Endothelial cell of umbilical vein (primary cell): ENCODE measurements at regions of chr7 and their contacts with region 1.

Region 1: GRCh38 chr7:106461993-106462859 is 177.4 kb upstream of the NAMPT start:
- DNase-seq: peak; percentile 83
- H3K4me3 ChIP-seq: no peak overlapping the region
- H3K27ac ChIP-seq: peak overlapping the region; percentile 32
- H3K4me1 ChIP-seq: peaks cover 22% of the 10 kb centered on the region
- H3K27me3 ChIP-seq: no peaks in the 10 kb centered on the region
- CTCF ChIP-seq: peak; percentile 25 to 37
- POLR2A ChIP-seq: no peak

Region 2: DNA sequence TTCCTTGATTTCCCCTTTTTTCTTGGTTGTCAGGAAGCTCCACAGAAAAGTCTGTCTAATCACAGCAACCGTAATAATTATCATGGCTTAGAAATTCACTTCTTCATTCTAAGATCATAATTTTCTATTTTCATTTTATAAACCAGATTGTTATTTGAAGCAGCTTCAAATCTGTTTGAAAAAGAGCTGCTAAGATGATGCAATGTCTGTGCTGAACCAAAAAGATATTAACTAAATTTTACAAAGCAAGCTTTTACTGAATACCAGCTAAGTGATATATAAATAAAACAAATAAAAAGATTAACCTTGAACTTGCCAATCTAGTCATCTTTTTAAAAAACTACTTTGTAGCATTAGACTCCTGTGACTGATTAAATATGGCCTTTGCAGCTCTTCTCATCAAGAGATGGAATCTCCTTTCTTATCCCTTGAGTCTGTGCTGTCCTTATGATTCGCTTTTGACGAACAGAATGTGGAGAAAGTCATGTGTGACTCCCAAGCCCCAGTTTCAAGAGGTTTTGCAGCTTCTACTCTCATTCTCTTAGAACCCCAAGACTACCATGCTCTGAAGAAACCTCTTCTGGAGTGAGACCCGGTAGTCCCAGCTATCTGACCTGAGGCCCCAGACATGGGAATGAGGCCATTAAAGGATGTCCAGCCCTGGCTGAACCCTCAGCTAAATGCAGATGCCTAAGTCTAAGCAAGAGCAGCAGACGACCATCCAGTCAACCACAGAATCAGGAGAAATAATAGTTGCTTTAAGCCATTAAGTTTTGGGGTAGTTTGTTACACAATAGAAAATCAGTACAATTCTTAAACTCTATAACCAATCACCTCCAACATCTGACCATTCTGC is 191.9 kb before region 1 on chr7:
- CTCF ChIA-PET with region 1: interaction called, 19 read pairs
- POLR2A ChIA-PET with region 1: no interaction called
- dilution Hi-C with region 1: no loop called
- intact Hi-C with region 1: no loop called
- DNase-seq: no peak
- H3K4me3 ChIP-seq: no peak overlapping the region
- H3K27ac ChIP-seq: no peak overlapping the region
- H3K4me1 ChIP-seq: no peaks in the 10 kb centered on the region
- H3K27me3 ChIP-seq: no peaks in the 10 kb centered on the region
- CTCF ChIP-seq: no peak
- POLR2A ChIP-seq: no peak

Region 3: DNA sequence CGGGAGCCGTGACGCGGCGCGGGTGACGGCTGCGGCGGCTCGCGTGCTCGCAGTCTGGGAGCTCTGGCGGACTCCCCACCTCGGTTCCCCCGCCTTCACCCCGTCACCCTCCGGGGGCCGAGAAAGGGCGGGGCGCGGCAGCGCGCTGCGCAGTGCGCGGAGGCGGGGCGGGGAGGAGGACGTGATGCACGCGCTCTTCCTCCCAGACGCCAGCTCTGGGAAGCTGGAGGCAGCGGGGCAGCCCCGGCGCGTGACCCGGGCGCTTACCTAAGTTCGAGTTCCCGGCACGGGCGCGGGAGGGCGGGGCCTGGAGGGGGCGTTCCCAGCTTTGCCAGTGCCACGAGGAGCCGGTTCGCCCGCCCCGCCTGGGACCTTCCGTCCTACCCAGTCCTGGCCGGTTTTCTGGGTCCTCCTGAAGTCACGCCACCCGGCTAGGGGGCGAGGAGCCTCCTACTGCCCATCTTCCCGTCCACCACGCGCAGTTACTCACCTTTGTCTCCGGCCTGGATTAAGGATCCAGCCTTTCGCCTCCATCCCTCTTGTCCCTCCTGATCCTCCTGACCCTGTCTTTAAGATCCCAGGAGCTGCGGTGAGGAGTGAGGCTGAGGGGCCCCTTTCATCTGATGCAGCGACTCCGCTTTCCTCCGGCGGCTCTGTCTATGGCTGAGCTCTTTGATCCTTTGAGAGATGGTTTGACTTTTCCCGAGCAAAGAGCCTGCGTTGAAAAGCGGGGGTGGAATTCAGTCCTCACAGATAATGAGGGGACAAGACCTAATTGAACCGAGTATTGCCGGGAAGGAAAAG is 177.0 kb before region 1 on chr7:
- CTCF ChIA-PET with region 1: interaction called, 49 read pairs
- POLR2A ChIA-PET with region 1: interaction called, 11 read pairs
- dilution Hi-C with region 1: no loop called
- intact Hi-C with region 1: loop called (anchors 1 kb)
- DNase-seq: peak; percentile 99
- H3K4me3 ChIP-seq: peak overlapping the region; percentile 56 to 80 (median 72)
- H3K27ac ChIP-seq: peak overlapping the region; percentile 80
- H3K4me1 ChIP-seq: peaks cover 27% of the 10 kb centered on the region
- H3K27me3 ChIP-seq: no peaks in the 10 kb centered on the region
- CTCF ChIP-seq: no peak
- POLR2A ChIP-seq: peak; percentile 93

Region 4: GRCh38 chr7:106384371-106384770 is 77.9 kb before region 1 on chr7:
- CTCF ChIA-PET with region 1: interaction called, 14 read pairs
- POLR2A ChIA-PET with region 1: no interaction called
- dilution Hi-C with region 1: no loop called
- intact Hi-C with region 1: no loop called
- DNase-seq: no peak
- H3K4me3 ChIP-seq: no peak overlapping the region
- H3K27ac ChIP-seq: no peak overlapping the region
- H3K4me1 ChIP-seq: no peaks in the 10 kb centered on the region
- H3K27me3 ChIP-seq: peaks cover 7 to 8% of the 10 kb centered on the region in 2 experiments
- CTCF ChIP-seq: no peak
- POLR2A ChIP-seq: no peak

Region 5: DNA sequence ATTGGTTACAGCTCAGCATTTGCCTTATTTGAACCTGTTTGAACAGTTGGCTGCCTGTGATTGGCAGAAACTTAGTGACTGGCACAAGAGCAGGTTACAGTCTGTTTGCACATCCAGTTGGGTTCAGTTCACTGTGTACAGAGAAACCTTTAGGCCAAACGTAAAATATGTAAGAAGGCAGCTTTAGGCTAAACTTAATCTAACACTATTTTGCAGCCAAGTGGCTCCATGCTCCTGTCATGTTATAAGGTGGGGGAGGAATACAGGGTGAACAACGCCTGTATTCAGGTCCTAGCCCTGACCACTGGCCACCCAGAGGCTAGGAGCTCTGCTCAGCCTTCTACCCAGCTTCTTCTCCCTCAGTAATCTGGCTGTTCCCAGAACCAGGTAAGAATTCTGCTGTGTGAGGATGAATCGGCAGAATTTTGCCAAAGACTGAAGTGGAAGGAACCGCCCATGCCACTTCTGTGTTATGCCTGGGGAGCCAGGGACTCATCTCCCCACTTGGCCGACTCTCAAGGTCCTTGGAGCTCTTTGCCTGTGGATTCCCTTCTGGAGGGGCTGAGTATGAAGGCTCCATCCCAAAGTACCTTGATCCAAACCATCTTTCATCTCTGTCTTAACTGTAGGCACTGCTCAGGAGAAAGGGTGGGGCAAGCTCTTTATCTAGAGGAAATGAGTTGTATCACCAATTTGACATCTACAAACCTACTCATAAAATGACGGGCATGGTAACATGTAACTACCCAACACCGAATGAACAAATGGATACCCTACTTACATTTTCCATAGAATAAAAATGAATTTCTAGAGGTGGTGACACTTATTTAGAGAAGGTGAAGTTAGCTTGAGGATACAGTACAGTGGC is 13.0 kb before region 1 on chr7:
- CTCF ChIA-PET with region 1: interaction called, 11 read pairs
- POLR2A ChIA-PET with region 1: no interaction called
- dilution Hi-C with region 1: no loop called
- intact Hi-C with region 1: no loop called
- DNase-seq: no peak
- H3K4me3 ChIP-seq: no peak overlapping the region
- H3K27ac ChIP-seq: no peak overlapping the region
- H3K4me1 ChIP-seq: no peaks in the 10 kb centered on the region
- H3K27me3 ChIP-seq: no peaks in the 10 kb centered on the region
- CTCF ChIP-seq: no peak
- POLR2A ChIP-seq: no peak

Region 6: DNA sequence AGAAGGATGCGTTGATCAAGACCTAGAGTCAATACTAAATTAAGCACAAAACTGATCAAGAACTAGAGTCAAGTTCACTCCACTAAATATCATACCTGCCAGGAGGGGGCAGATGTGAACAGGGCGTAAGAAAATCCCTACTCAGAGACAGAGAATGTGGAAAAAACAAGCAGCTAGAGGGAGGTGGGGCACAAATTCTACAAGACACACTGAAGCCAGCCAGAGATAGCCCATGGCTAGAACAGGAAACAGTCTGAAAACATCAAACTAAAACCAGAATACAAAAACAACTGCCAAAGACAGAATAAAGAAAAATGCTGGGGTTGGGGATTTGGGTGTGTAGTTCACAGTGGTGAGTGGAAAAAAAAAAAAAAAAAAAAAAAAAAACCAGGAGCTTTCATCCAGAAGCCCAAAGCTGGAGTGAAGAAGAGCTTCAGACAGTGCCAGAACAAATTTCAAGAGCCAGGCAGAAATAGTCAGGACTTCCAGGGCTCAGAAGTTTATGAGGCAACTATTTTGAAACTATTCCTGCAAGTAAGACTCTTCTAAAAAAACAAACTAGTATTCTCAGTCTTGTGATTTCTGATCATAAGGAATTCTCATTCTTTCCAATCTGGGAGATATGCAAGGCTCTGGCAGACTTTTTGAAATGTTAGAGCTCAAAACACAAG is 80.5 kb after region 1 on chr7:
- CTCF ChIA-PET with region 1: interaction called, 26 read pairs
- POLR2A ChIA-PET with region 1: interaction called, 3 read pairs
- dilution Hi-C with region 1: no loop called
- intact Hi-C with region 1: loop called (anchors 1 kb)
- DNase-seq: peak; percentile 96
- H3K4me3 ChIP-seq: no peak overlapping the region
- H3K27ac ChIP-seq: peak overlapping the region; percentile 59
- H3K4me1 ChIP-seq: peaks cover 44% of the 10 kb centered on the region
- H3K27me3 ChIP-seq: no peaks in the 10 kb centered on the region
- CTCF ChIP-seq: peak; percentile 62 to 68
- POLR2A ChIP-seq: no peak

Region 7: DNA sequence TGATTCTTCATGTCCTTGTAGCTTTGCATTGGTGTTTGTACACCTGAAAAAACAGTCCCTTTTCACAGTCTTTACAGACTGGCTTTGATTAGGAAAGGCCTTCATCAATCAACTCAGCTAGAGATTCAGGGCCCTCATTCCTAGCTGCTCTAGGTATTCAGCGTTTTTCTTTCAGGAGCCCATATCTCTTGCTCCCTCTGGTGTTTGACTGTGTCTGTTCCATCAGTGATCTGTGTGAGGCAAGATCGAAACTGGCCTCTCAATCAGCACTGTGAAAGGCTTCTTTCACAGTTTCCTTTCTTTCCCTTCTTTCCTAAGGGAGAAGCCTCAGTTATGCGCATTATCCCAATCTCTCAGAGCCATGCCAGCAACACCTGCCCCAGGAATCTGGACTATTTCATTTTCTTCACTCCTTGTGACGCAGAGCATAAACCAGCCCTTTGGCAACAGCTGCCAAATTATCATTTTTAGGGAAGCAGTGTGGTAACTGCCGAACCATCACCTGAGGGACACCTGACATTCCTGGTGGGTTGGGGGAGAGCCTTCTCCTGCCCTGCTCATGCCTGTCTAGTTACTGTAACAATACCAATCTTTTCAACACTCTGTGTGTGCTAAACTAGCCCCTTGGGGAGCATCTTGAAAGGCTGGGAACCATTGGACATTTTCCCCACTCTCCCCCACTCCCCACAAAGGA is 274.4 kb after region 1 on chr7:
- CTCF ChIA-PET with region 1: interaction called, 9 read pairs
- POLR2A ChIA-PET with region 1: no interaction called
- dilution Hi-C with region 1: no loop called
- intact Hi-C with region 1: loop called (anchors 2 kb)
- DNase-seq: peak; percentile 84
- H3K4me3 ChIP-seq: no peak overlapping the region
- H3K27ac ChIP-seq: peak overlapping the region; percentile 37
- H3K4me1 ChIP-seq: peaks cover 18% of the 10 kb centered on the region
- H3K27me3 ChIP-seq: no peaks in the 10 kb centered on the region
- CTCF ChIP-seq: peak; percentile 65 to 74
- POLR2A ChIP-seq: no peak

Region 8: DNA sequence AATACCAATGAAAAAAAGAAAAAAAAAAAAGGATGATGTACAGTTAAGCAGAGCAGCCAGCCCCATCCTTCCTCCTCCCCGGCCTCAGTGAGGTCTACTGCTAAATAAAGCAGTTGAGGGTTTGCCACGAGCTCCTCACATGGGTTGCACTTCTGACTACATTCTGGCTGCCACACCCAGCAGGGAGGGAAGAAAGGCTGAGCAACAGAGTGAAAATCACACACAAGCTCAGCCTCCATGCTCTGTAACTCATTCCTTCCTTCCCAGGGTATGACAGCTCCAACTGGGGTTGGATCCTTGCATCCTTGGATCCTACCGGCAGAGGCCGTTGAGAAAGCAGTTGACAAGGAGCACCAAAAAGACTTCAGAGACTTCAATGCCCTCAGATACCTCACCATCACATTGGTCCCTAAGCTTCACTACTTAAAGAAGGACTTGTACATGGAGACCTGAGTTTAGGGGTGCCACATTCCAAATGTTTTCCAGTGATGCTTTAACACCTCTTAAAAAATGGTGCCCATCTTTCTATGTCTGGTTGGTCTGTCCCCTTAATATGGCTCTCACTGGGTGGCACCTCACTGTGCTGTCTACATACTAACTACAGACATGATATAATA is 349.9 kb after region 1 on chr7:
- CTCF ChIA-PET with region 1: no interaction called
- POLR2A ChIA-PET with region 1: no interaction called
- dilution Hi-C with region 1: no loop called
- intact Hi-C with region 1: no loop called
- DNase-seq: no peak
- H3K4me3 ChIP-seq: no peak overlapping the region
- H3K27ac ChIP-seq: no peak overlapping the region
- H3K4me1 ChIP-seq: peaks cover 5% of the 10 kb centered on the region
- H3K27me3 ChIP-seq: no peaks in the 10 kb centered on the region
- CTCF ChIP-seq: no peak
- POLR2A ChIP-seq: no peak

Region 9: DNA sequence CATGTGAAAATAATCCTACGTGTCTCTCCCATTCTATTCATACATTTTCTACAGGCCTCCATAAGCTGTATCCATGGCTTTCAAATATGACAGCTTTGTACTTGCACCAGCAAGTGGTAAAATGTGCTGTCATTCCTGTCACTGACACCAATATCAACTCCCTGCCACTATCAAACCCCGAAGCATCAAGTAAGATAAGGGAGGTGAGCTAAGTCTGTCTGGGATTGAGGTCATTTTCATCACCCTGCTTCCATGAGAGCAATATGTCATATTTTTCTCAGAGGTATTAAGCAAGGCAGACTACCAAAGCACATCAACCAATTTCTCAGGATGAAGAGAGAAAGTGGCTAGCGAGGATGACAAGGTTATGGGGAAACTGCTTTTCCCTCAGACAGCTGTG is 1018.7 kb after region 1 on chr7:
- CTCF ChIA-PET with region 1: no interaction called
- POLR2A ChIA-PET with region 1: no interaction called
- dilution Hi-C with region 1: no loop called
- intact Hi-C with region 1: no loop called
- DNase-seq: no peak
- H3K4me3 ChIP-seq: no peak overlapping the region
- H3K27ac ChIP-seq: no peak overlapping the region
- H3K4me1 ChIP-seq: no peaks in the 10 kb centered on the region
- H3K27me3 ChIP-seq: no peaks in the 10 kb centered on the region
- CTCF ChIP-seq: no peak
- POLR2A ChIP-seq: no peak